Activated CD4-positive, alpha-beta T cell treated with anti-CD3 and anti-CD28 coated beads, Interleukin-2, amount 10 ng/mL, durations not matched to agents 7 days and 5 days (primary cell): ENCODE measurements at regions of chr12 and their contacts with region 1.

Region 1: DNA sequence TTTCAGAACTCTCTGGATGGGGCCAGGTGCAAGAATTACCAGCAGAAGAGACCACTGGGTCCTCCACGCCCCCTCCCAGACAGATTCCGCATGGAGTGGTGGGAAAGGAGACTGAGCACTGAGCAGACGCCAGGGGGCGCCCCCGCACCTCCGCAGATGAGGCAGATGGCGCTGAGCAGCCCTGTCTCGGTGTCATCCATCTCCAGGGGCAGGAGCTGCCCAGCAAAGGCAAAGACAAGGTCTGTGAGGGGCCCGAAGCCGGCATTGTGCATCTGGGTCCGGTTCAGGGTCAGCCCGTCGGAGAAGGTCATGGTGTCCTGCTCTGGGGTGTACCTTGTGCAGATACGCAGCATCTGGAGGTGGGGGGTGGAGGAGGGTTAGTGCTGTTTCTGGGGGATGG is 6.3 kb upstream of the ITGB7 start:
- DNase-seq: peak; percentile 84
- H3K4me3 Mint-ChIP-seq: no peak overlapping the region
- H3K27ac Mint-ChIP-seq: peak overlapping the region; percentile 37
- H3K4me1 Mint-ChIP-seq: peaks cover 93% of the 10 kb centered on the region
- H3K27me3 Mint-ChIP-seq: no peaks in the 10 kb centered on the region

Region 2: GRCh38 chr12:52568111-52568510 is 645.2 kb before region 1 on chr12:
- CTCF ChIA-PET with region 1: no interaction called
- POLR2A ChIA-PET with region 1: no interaction called
- DNase-seq: no peak
- H3K4me3 Mint-ChIP-seq: no peak overlapping the region
- H3K27ac Mint-ChIP-seq: no peak overlapping the region
- H3K4me1 Mint-ChIP-seq: no peaks in the 10 kb centered on the region
- H3K27me3 Mint-ChIP-seq: peaks cover 15% of the 10 kb centered on the region

Region 3: GRCh38 chr12:53031617-53032016 is 181.7 kb before region 1 on chr12:
- CTCF ChIA-PET with region 1: no interaction called
- POLR2A ChIA-PET with region 1: no interaction called
- DNase-seq: no peak
- H3K4me3 Mint-ChIP-seq: no peak overlapping the region
- H3K27ac Mint-ChIP-seq: no peak overlapping the region
- H3K4me1 Mint-ChIP-seq: peaks cover 10% of the 10 kb centered on the region
- H3K27me3 Mint-ChIP-seq: no peaks in the 10 kb centered on the region

Region 4: GRCh38 chr12:53190108-53190729 is 23.1 kb before region 1 on chr12:
- CTCF ChIA-PET with region 1: interaction called, 71 read pairs
- POLR2A ChIA-PET with region 1: no interaction called
- DNase-seq: peak; percentile 44
- H3K4me3 Mint-ChIP-seq: no peak overlapping the region
- H3K27ac Mint-ChIP-seq: no peak overlapping the region
- H3K4me1 Mint-ChIP-seq: peaks cover 30% of the 10 kb centered on the region
- H3K27me3 Mint-ChIP-seq: no peaks in the 10 kb centered on the region

Region 5: DNA sequence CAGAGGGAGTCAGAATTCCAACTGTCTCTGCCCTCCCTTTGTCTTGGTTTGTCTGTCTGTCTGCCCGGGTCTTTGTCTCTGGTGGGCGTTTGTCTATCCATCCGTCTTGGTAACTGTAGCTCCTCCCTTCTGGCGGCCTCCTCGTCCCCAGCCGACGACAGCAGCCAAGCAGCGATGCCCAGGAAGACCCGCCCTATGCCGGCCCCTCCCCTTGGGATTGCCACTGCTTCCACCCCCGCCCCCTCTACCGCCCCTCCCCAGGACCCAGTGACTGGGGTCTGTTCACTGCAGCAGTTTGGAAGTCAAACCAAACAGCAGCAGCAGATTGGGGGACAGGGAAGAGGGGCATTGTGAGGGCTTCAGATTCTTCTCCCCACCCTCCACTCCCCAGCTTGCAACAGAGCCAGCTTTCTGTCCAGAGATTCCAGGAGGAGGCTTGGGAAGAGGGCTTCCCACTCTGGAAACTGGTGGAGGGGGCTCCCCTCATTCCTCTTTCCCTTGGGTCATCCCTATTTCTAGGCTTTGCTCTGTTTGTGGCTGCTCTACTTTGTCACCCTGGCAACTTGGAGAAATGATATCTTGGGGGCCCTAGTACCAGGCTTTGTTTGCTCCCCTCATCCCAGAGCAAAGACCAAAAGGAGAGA is 21.0 kb after region 1 on chr12:
- CTCF ChIA-PET with region 1: interaction called, 12 read pairs
- POLR2A ChIA-PET with region 1: no interaction called
- DNase-seq: no peak
- H3K4me3 Mint-ChIP-seq: no peak overlapping the region
- H3K27ac Mint-ChIP-seq: no peak overlapping the region
- H3K4me1 Mint-ChIP-seq: peaks cover 60% of the 10 kb centered on the region
- H3K27me3 Mint-ChIP-seq: no peaks in the 10 kb centered on the region

Region 6: GRCh38 chr12:53279283-53279869 is 66.0 kb after region 1 on chr12:
- CTCF ChIA-PET with region 1: interaction called, 16 read pairs
- POLR2A ChIA-PET with region 1: no interaction called
- DNase-seq: no peak
- H3K4me3 Mint-ChIP-seq: no peak overlapping the region
- H3K27ac Mint-ChIP-seq: no peak overlapping the region
- H3K4me1 Mint-ChIP-seq: peaks cover 5% of the 10 kb centered on the region
- H3K27me3 Mint-ChIP-seq: no peaks in the 10 kb centered on the region

Region 7: GRCh38 chr12:53344824-53345485 is 131.6 kb after region 1 on chr12:
- CTCF ChIA-PET with region 1: interaction called, 13 read pairs
- POLR2A ChIA-PET with region 1: no interaction called
- DNase-seq: peak; percentile 66
- H3K4me3 Mint-ChIP-seq: peak overlapping the region; percentile 85
- H3K27ac Mint-ChIP-seq: peak overlapping the region; percentile 89
- H3K4me1 Mint-ChIP-seq: peaks cover 21% of the 10 kb centered on the region
- H3K27me3 Mint-ChIP-seq: peaks cover 8% of the 10 kb centered on the region